Activated B cell treated with CpG ODN at 0.5 μM for 24 hours (primary cell): ENCODE measurements at regions of chr6 and their contacts with region 1.

Region 1: GRCh38 chr6:169789982-169790927 is 38.8 kb downstream of the ERMARD start:
- DNase-seq: peak; percentile 65
- ATAC-seq: peak; percentile 97
- H3K4me3 Mint-ChIP-seq: peak overlapping the region; percentile 85
- H3K27ac Mint-ChIP-seq: no peak overlapping the region
- H3K4me1 Mint-ChIP-seq: peaks cover 10% of the 10 kb centered on the region
- H3K27me3 Mint-ChIP-seq: peaks cover 35% of the 10 kb centered on the region
- CTCF ChIP-seq: peak; percentile 36

Region 2: GRCh38 chr6:168895102-168895812 is 895.0 kb before region 1 on chr6:
- CTCF ChIA-PET with region 1: no interaction called
- POLR2A ChIA-PET with region 1: no interaction called
- intact Hi-C with region 1: loop called (anchors 5 kb)
- DNase-seq: peak; percentile 48
- ATAC-seq: peak; percentile 88
- H3K4me3 Mint-ChIP-seq: peak overlapping the region; percentile 51
- H3K27ac Mint-ChIP-seq: no peak overlapping the region
- H3K4me1 Mint-ChIP-seq: peaks cover 6% of the 10 kb centered on the region
- H3K27me3 Mint-ChIP-seq: peaks cover 6% of the 10 kb centered on the region
- CTCF ChIP-seq: peak; percentile 98

Region 3: GRCh38 chr6:169654598-169655391 is 135.5 kb before region 1 on chr6:
- CTCF ChIA-PET with region 1: no interaction called
- POLR2A ChIA-PET with region 1: no interaction called
- intact Hi-C with region 1: no loop called
- DNase-seq: no peak
- ATAC-seq: peak; percentile 28
- H3K4me3 Mint-ChIP-seq: peak overlapping the region; percentile 53
- H3K27ac Mint-ChIP-seq: no peak overlapping the region
- H3K4me1 Mint-ChIP-seq: no peaks in the 10 kb centered on the region
- H3K27me3 Mint-ChIP-seq: no peaks in the 10 kb centered on the region
- CTCF ChIP-seq: no peak

Region 4: GRCh38 chr6:169803271-169803811 is 13.1 kb after region 1 on chr6:
- CTCF ChIA-PET with region 1: interaction called, 22 read pairs
- POLR2A ChIA-PET with region 1: no interaction called
- intact Hi-C with region 1: no loop called
- DNase-seq: no peak
- ATAC-seq: no peak
- H3K4me3 Mint-ChIP-seq: no peak overlapping the region
- H3K27ac Mint-ChIP-seq: no peak overlapping the region
- H3K4me1 Mint-ChIP-seq: peaks cover 9% of the 10 kb centered on the region
- H3K27me3 Mint-ChIP-seq: peaks cover 19% of the 10 kb centered on the region
- CTCF ChIP-seq: no peak

Region 5: DNA sequence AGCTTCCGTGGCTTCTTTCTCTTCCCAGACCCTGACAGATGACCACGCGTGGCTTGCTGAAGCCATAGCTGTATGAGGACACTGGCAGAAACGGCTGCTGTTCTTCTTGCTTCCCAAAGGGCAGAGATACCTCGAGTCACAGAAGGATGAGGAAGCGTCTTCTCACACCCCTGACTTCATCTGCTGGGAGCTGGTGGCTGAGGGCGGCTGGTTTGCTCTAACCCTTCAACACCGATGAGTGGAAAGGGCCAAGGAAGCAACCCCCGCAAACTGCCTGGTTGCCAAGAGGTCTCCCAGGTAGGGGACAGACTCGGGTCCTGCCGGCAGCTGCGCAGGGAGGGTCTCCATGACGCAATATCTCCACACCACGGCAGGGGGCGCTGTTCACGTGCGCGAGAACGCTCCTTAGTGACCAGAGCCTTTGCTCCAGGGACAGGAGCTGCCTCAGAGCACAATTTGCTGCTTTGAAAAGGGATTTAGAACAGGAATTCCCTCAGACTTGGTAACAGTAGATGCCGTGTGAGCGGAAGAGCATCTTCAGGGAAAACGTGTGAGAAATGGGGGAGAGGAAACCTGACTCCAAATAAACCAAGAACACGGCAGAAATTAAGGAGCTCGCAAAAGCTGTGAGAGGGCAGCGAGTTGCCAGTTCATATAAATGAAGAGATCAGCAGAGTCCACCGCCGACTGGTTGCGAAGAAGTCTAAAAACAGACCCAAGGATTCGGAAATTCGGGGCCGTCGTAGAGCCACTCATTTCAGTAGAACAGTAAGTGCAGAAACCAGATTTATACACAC is 41.4 kb after region 1 on chr6:
- CTCF ChIA-PET with region 1: interaction called, 3 read pairs
- POLR2A ChIA-PET with region 1: no interaction called
- intact Hi-C with region 1: loop called (anchors 1 kb)
- DNase-seq: peak; percentile 57
- ATAC-seq: peak; percentile 64
- H3K4me3 Mint-ChIP-seq: no peak overlapping the region
- H3K27ac Mint-ChIP-seq: no peak overlapping the region
- H3K4me1 Mint-ChIP-seq: no peaks in the 10 kb centered on the region
- H3K27me3 Mint-ChIP-seq: peaks cover 29% of the 10 kb centered on the region
- CTCF ChIP-seq: no peak

Region 6: GRCh38 chr6:170516783-170517616 is 726.7 kb after region 1 on chr6:
- CTCF ChIA-PET with region 1: interaction called, 36 read pairs
- POLR2A ChIA-PET with region 1: no interaction called
- intact Hi-C with region 1: loop called (anchors 1 kb)
- DNase-seq: no peak
- ATAC-seq: peak; percentile 84
- H3K4me3 Mint-ChIP-seq: no peak overlapping the region
- H3K27ac Mint-ChIP-seq: no peak overlapping the region
- H3K4me1 Mint-ChIP-seq: peaks cover 2% of the 10 kb centered on the region
- H3K27me3 Mint-ChIP-seq: peaks cover 24% of the 10 kb centered on the region
- CTCF ChIP-seq: no peak

Region 7: GRCh38 chr6:170529839-170530469 is 739.7 kb after region 1 on chr6:
- CTCF ChIA-PET with region 1: interaction called, 15 read pairs
- POLR2A ChIA-PET with region 1: no interaction called
- intact Hi-C with region 1: loop called (anchors 1 kb)
- DNase-seq: peak; percentile 31
- ATAC-seq: peak; percentile 61
- H3K4me3 Mint-ChIP-seq: no peak overlapping the region
- H3K27ac Mint-ChIP-seq: no peak overlapping the region
- H3K4me1 Mint-ChIP-seq: no peaks in the 10 kb centered on the region
- H3K27me3 Mint-ChIP-seq: no peaks in the 10 kb centered on the region
- CTCF ChIP-seq: peak; percentile 61